ENCODE measurements at regions of chr4 and their contacts with region 1.

Region 1: GRCh38 chr4:14994241-14994640 is 8.0 kb upstream of the CPEB2 start:
- DNase-seq: no peak
- H3K4me3 ChIP-seq: no peak overlapping the region
- H3K27ac ChIP-seq: no peak overlapping the region
- H3K4me1 ChIP-seq: peaks cover 8% of the 10 kb centered on the region
- H3K27me3 ChIP-seq: no peaks in the 10 kb centered on the region
- CTCF ChIP-seq: no peak

Region 2: GRCh38 chr4:14943749-14944148 is 50.5 kb before region 1 on chr4:
- dilution Hi-C with region 1: loop called (anchors 10 kb)
- DNase-seq: no peak
- H3K4me3 ChIP-seq: no peak overlapping the region
- H3K27ac ChIP-seq: no peak overlapping the region
- H3K4me1 ChIP-seq: no peaks in the 10 kb centered on the region
- H3K27me3 ChIP-seq: no peaks in the 10 kb centered on the region
- CTCF ChIP-seq: no peak